GM10248 (cell line): ENCODE measurements at regions of chr19 and their contacts with region 1.

Region 1: GRCh38 chr19:18328340-18329034 is 5.6 kb upstream of the LSM4 start:
- DNase-seq: peak; percentile 95
- CTCF ChIP-seq: peak; percentile 83

Region 2: GRCh38 chr19:18179957-18180356 is 148.5 kb before region 1 on chr19:
- CTCF ChIA-PET with region 1: no interaction called
- POLR2A ChIA-PET with region 1: no interaction called
- DNase-seq: no peak
- CTCF ChIP-seq: no peak

Region 3: DNA sequence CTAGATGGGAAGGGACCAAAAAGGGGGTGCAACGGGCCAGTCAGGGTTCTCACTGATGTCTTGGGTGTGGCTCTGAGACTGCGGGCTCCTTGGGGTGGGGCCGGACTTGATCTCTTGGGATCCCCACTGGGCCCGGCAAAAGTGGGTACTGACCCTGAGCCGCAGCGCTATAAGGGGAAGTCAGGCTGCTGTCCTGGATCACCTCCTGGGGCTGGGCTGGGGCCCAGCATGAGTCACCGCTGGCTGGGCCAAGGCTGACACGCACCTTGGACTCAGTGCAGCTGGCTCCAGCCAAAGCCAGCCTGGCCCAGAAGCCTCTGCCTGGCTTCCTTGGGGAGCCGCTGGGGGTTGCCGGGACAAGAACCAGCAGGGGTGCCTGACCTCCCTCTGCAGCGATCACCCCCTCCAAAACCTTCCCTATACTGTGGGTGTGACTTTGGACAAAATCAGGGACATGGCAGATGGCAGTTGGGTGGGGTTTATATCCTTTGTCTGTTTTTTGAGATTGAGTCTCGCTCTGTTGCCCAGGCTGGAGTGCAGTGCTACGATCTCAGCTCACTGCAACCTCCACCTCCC is 53.6 kb before region 1 on chr19:
- CTCF ChIA-PET with region 1: interaction called, 171 read pairs
- POLR2A ChIA-PET with region 1: interaction called, 90 read pairs
- DNase-seq: no peak
- CTCF ChIP-seq: no peak

Region 4: GRCh38 chr19:18310118-18310909 is 18.2 kb before region 1 on chr19:
- CTCF ChIA-PET with region 1: interaction called, 86 read pairs
- POLR2A ChIA-PET with region 1: interaction called, 5 read pairs
- DNase-seq: no peak
- CTCF ChIP-seq: no peak

Region 5: GRCh38 chr19:18349524-18350128 is 21.1 kb after region 1 on chr19:
- CTCF ChIA-PET with region 1: interaction called, 20 read pairs
- POLR2A ChIA-PET with region 1: no interaction called
- DNase-seq: peak; percentile 68
- CTCF ChIP-seq: peak; percentile 67

Region 6: DNA sequence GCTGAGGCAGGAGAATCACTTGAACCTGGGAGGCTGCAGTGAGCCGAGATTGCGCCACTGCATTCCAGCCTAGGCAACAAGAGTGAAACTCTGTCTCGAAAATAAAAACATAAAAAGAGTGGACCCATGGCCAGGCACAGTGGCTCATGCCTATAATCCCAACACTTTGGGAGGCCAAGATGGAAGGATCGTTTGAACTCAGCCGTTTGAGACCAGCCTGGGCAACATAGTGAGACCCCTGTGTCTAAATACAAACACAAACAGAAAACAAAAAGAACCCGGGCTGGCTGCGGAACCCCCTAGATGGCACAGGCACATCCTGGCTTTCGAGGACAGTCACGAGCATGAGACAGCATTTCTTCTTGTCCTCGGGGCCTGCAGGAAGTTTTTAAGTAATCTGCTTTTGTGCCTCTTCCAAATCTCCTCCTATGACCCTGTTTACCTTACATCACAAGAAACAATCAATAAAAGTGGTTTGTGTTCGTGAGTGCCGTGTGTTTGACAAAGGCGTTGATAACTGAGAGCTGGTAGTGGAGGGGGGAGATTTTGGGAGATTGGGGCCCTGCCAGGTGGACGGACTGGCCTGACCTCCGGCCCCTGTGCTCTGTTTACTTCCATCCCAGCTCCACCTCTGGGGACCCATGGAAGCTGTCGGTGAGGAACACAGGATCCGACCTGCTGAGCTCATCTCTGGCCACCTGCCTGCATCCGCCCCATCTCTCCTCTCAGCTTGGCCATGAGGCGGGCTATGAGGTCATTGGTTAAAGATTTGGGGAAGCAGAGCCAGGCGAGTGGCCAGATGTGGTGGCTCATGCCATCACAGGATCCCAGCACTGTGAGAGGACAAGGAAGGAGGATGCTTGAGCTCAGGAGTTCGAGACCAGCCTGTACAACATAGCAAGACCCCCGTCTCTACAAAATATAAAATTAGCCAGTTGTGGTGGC is 51.6 kb after region 1 on chr19:
- CTCF ChIA-PET with region 1: interaction called, 13 read pairs
- POLR2A ChIA-PET with region 1: no interaction called
- DNase-seq: no peak
- CTCF ChIP-seq: no peak

Region 7: DNA sequence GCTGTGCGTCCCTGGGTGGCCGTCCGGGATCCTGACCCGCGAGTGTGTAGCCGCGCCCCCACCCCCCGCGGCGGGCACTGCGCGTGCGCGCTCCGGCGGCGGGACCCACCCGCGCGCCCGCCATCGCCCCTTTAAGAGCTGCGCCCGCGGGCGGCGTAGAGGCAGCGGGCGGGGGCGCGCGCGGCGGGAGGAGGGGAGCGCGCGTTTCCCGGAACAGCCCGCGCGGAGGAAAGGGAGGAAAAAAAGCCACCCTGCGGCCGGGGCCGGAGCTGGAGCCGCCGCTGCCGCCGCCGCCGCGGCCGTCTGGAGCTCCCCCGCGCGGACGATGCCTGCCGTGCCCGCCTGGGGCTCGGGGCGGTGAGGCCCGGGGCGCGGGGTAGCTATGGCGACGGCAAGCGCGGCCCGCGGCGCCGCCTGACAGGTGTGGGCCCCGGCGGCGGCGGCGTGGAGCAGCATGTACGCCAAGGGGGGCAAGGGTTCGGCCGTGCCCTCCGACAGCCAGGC is 90.8 kb after region 1 on chr19 and contains the start of gene SSBP4:
- CTCF ChIA-PET with region 1: interaction called, 58 read pairs
- POLR2A ChIA-PET with region 1: interaction called, 3 read pairs
- DNase-seq: peak; percentile 91
- CTCF ChIP-seq: peak; percentile 30

Region 8: GRCh38 chr19:18436671-18437490 is 108.4 kb after region 1 on chr19:
- CTCF ChIA-PET with region 1: no interaction called
- POLR2A ChIA-PET with region 1: no interaction called
- DNase-seq: peak; percentile 93
- CTCF ChIP-seq: no peak